PC-3 (cell line): ENCODE measurements at regions of chr1 and their contacts with region 1.

Region 1: DNA sequence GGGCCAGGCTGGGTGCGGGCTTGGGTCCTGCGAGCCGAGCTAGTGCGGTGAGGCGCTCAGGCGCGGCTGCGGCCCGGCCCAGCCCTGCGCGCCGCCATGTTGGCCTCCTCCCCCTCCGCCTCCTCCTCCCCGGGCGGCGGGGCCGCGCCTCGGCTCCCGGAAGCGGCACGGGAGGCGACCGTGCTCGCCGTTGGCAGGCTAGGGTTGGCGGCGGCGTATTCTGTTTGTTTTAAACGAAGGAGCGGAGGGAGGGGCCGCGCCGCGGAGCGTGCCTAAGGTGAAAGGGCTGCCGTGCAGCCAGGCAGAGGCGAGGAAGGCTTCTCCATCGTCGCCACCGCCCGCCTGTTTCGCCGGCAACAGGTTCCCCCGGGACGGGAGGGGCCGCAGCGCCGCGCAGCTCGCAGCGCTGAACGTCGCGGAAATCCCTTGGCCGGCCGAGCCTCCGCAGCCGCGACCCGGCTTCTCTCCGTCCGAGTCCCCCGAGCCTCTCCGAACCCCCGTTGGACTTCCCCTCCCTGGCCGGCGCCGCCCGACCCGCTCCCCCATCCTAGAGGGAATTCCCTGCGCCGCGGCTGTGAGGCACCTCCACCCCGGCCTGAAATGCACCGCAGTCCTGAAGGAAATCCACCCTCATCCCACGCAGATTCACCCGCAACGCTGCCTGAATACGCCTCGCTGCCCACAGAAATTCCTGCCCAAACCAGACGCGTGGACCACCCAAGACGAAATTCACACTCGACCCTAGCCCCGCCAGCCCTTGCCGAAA is at the start of gene USP24:
- DNase-seq: peak; percentile 81
- ATAC-seq: peak; percentile 69
- H3K4me3 ChIP-seq: peak within 1 kb of the TSS; percentile 95
- H3K27ac ChIP-seq: peak within 1 kb of the TSS; percentile 60
- H3K4me1 ChIP-seq: peaks cover 42% of the 10 kb centered on the region
- H3K27me3 ChIP-seq: no peaks in the 10 kb centered on the region
- CTCF ChIP-seq: no peak
- total RNA-seq, gene USP24: 29.1 and 38.5 TPM in 2 replicates

Region 2: DNA sequence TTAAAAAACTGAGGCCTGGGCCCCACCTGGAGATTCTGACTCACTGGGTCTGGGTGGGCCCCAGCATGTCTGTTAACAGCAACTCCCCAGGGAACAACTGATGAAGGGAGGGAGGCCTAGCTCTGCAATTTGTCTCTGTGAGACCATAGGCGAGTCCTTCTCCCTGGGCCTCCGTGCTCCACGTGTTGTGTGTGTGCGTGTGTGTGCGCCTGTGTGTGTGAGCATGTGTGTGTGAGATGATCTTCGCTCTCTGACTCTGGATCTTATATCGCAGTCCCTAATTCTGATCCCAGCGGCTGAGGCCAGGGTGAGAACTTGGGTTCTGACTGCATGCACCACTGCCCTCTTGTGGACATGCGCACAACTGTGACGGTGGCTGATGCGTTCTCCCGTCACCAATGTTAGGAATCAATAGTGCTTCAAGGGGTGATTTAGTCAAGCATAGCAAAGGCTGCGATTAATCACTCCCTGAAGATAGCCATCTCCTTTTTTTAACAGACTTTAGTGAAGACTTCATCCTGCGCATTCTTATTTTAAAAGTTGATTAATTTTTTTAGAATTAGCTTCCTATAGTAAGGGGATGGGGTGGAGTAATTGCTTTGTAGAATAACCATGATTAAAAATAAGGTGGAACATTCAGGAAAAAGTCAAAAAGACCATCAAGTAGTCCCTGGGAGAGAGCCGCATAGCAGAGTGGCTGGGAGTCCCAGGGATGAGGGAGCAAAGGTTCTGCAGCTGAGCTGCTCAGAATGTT is 62.1 kb after region 1 on chr1:
- CTCF ChIA-PET with region 1: no interaction called
- POLR2A ChIA-PET with region 1: no interaction called
- intact Hi-C with region 1: loop called (anchors 1 kb)
- DNase-seq: peak; percentile 83
- ATAC-seq: peak; percentile 94
- H3K4me3 ChIP-seq: no peak overlapping the region
- H3K27ac ChIP-seq: no peak overlapping the region
- H3K4me1 ChIP-seq: 0 out of 2 replicates have a peak, but pooled peaks cover 2% of the 10 kb centered on the region
- H3K27me3 ChIP-seq: no peaks in the 10 kb centered on the region
- CTCF ChIP-seq: peak; percentile 89